Ascending aorta (tissue), 2 donors: ENCODE measurements at regions of chr2 and their contacts with region 1.

Region 1: DNA sequence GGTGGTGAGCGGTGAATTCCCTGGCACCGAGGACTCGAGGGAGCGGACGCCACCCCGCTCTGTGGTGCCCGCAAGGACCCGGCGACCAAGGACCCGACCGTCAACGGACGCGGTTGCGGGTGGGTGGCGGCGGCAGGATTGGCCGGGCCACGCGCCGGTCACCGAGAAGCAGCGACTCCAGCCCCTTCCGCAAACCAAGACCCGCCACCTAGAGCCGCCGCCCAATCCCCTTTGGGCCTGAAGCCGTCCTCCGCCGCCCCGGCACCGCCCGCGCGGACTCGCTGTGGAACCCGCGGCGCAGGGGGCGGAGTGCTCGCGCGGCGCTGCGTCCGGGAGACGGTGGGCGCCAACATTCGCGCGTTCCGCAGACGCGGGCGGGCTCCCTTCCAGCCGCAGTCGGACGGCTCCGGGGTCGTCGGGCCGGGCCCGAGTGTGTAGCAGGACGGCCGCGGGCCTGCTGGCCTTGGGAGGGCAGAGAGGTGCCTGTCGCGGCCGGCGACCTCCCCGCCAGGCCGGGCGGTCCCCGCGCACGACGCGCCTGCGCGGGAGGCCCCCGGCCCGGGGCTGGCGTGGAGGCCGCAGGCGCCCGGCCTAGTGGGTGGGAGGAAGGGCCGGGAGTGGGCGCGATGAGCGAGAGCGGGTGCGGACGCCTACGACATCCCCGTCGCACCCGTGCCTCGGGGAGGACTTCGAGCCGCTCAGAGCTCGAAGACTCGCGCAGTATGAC is at the starts of genes FAM228B and PFN4:
- DNase-seq: peak; percentile 61 to 94
- H3K4me3 ChIP-seq: peak within 1 kb of the TSS; percentile 79 to 88
- H3K27ac ChIP-seq: peak within 1 kb of the TSS; percentile 92 to 95
- H3K4me1 ChIP-seq: peaks cover 0 to 8% of the 10 kb centered on the region in 2 donors
- H3K27me3 ChIP-seq: no peaks in the 10 kb centered on the region
- CTCF ChIP-seq: no peak
- total RNA-seq, gene FAM228B: 144 TPM
- total RNA-seq, gene PFN4: not detected

Region 2: GRCh38 chr2:24046930-24047702 is 76.2 kb before region 1 on chr2 and contains the start of gene WDCP:
- intact Hi-C with region 1: loop called (anchors 2 kb)
- DNase-seq: peak; percentile 96 to 99
- H3K4me3 ChIP-seq: peak within 1 kb of the TSS; percentile 79 to 86
- H3K27ac ChIP-seq: peak within 1 kb of the TSS; percentile 68 to 75
- H3K4me1 ChIP-seq: peaks cover 0 to 17% of the 10 kb centered on the region in 2 donors
- H3K27me3 ChIP-seq: no peaks in the 10 kb centered on the region
- CTCF ChIP-seq: no peak
- total RNA-seq, gene WDCP: 1.9 TPM

Region 3: GRCh38 chr2:24075915-24076848 is 47.2 kb before region 1 on chr2 and contains the start of gene SF3B6:
- intact Hi-C with region 1: loop called (anchors 2 kb)
- DNase-seq: peak; percentile 98 to 99
- H3K4me3 ChIP-seq: peak within 1 kb of the TSS; percentile 57 to 79
- H3K27ac ChIP-seq: peak within 1 kb of the TSS; percentile 92 to 94
- H3K4me1 ChIP-seq: peaks cover 2 to 4% of the 10 kb centered on the region in 2 donors
- H3K27me3 ChIP-seq: no peaks in the 10 kb centered on the region
- CTCF ChIP-seq: no peak
- total RNA-seq, gene SF3B6: 26.9 TPM

Region 4: GRCh38 chr2:24084386-24085361 is 38.7 kb before region 1 on chr2 and contains the start of gene TP53I3:
- intact Hi-C with region 1: loop called (anchors 2 kb)
- DNase-seq: peak; percentile 67 to 92
- H3K4me3 ChIP-seq: peak within 1 kb of the TSS; percentile 63 to 80
- H3K27ac ChIP-seq: peak within 1 kb of the TSS; percentile 77 to 92
- H3K4me1 ChIP-seq: peaks cover 0 to 9% of the 10 kb centered on the region in 2 donors
- H3K27me3 ChIP-seq: no peaks in the 10 kb centered on the region
- CTCF ChIP-seq: peak; percentile 94 to 97 (median 95)
- total RNA-seq, gene TP53I3: 1.6 TPM

Region 5: GRCh38 chr2:24175631-24176187 is 52.4 kb after region 1 on chr2:
- intact Hi-C with region 1: no loop called
- DNase-seq: no peak
- H3K4me3 ChIP-seq: peak overlapping the region in 1 of 2 donors; percentile 49
- H3K27ac ChIP-seq: peak overlapping the region in 1 of 2 donors; percentile 1
- H3K4me1 ChIP-seq: no peaks in the 10 kb centered on the region
- H3K27me3 ChIP-seq: no peaks in the 10 kb centered on the region
- CTCF ChIP-seq: no peak

Region 6: GRCh38 chr2:24360050-24360962 is 236.9 kb after region 1 on chr2 and contains the start of gene ITSN2:
- intact Hi-C with region 1: loop called (anchors 10 kb)
- DNase-seq: peak in 1 of 2 donors; percentile 88
- H3K4me3 ChIP-seq: peak within 1 kb of the TSS; percentile 90 to 96
- H3K27ac ChIP-seq: peak within 1 kb of the TSS; percentile 94
- H3K4me1 ChIP-seq: peaks cover 3 to 12% of the 10 kb centered on the region in 2 donors
- H3K27me3 ChIP-seq: no peaks in the 10 kb centered on the region
- CTCF ChIP-seq: no peak
- total RNA-seq, gene ITSN2: 70.0 TPM